PC-9 (cell line): ENCODE measurements at regions of chr3 and their contacts with region 1.

Region 1: GRCh38 chr3:177448987-177449975 is 252.0 kb upstream of the TBL1XR1 start:
- DNase-seq: peak; percentile 82 to 99
- H3K4me3 ChIP-seq: peak overlapping the region; percentile 9; the same call in 1 of the 2 replicates
- H3K27ac ChIP-seq: peak overlapping the region; percentile 89
- H3K4me1 ChIP-seq: peaks cover 66% of the 10 kb centered on the region
- H3K27me3 ChIP-seq: no peaks in the 10 kb centered on the region
- CTCF ChIP-seq: no peak

Region 2: GRCh38 chr3:177050501-177051237 is 398.6 kb before region 1 on chr3:
- CTCF ChIA-PET with region 1: no interaction called
- POLR2A ChIA-PET with region 1: interaction called, 4 read pairs
- intact Hi-C with region 1: loop called (anchors 5 kb)
- DNase-seq: peak in 1 of 2 experiments; percentile 59
- H3K4me3 ChIP-seq: no peak overlapping the region
- H3K27ac ChIP-seq: peak overlapping the region; percentile 40
- H3K4me1 ChIP-seq: peaks cover 15% of the 10 kb centered on the region
- H3K27me3 ChIP-seq: no peaks in the 10 kb centered on the region
- CTCF ChIP-seq: peak; percentile 90

Region 3: DNA sequence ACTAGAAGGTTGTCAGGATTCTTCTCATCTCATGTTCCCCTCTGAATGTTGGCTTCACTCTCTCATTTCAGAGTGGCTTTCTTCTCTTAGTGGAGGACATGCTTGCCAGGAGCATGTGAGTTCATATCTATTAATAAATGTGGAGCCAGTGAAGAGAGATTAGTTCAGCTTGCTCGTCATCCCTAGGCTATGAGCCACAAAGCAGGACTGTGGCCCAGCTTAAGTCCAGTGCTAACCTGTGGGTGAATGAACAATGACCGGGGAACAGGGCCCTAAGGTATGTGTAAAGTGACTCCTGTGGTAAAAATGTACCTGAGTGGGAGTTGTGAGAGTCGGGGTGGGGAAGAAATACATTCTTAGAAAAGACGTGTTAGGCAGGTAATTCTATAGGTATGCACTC is 155.1 kb before region 1 on chr3:
- CTCF ChIA-PET with region 1: no interaction called
- POLR2A ChIA-PET with region 1: no interaction called
- intact Hi-C with region 1: loop called (anchors 2 kb)
- DNase-seq: peak; percentile 69 to 71
- H3K4me3 ChIP-seq: no peak overlapping the region
- H3K27ac ChIP-seq: peak overlapping the region; percentile 57; the same call in 1 of the 2 replicates
- H3K4me1 ChIP-seq: peaks cover 23% of the 10 kb centered on the region
- H3K27me3 ChIP-seq: no peaks in the 10 kb centered on the region
- CTCF ChIP-seq: no peak

Region 4: DNA sequence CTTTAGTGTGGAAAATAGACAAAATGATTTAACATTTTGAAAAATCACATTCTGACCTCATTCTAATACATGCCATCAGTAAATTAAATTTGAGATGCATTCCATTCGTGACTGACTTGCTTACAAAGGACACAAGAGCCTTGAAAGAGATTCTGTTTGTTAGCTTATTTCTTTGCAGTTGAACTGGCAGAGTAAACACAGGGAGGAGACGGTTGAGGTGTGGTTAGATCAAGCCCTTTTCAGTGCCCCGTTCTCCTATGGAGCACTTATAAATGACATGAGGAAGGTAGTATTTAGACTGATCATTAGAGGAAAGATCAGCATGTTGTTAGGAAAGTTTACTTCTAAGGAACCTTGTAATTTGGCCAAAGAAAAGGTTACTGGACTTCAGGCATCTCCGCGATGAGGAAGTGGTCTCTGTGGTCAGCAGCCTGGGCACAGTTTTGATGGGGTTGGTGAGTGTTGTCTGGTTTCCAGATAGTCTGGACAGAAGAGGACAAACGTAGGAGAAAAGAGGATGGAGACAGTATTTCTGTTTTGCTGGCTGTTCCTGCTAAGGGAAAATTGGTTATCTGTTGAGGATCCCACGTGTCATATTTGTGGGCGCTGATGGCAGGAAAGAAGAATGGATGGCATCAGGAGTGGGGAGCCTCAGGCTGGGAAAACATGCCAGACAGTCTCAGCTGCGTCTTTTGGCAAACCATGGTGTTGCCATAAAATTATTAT is 76.9 kb after region 1 on chr3:
- CTCF ChIA-PET with region 1: interaction called, 5 read pairs
- POLR2A ChIA-PET with region 1: no interaction called
- intact Hi-C with region 1: loop called (anchors 1 kb)
- DNase-seq: peak; percentile 25 to 87
- H3K4me3 ChIP-seq: no peak overlapping the region
- H3K27ac ChIP-seq: no peak overlapping the region
- H3K4me1 ChIP-seq: peaks cover 79% of the 10 kb centered on the region
- H3K27me3 ChIP-seq: no peaks in the 10 kb centered on the region
- CTCF ChIP-seq: no peak

Region 5: GRCh38 chr3:177615015-177615414 is 165.7 kb after region 1 on chr3:
- CTCF ChIA-PET with region 1: no interaction called
- POLR2A ChIA-PET with region 1: interaction called, 8 read pairs
- intact Hi-C with region 1: loop called (anchors 1 kb)
- DNase-seq: peak; percentile 84 to 96
- H3K4me3 ChIP-seq: no peak overlapping the region
- H3K27ac ChIP-seq: peak overlapping the region; percentile 62
- H3K4me1 ChIP-seq: peaks cover 87% of the 10 kb centered on the region
- H3K27me3 ChIP-seq: no peaks in the 10 kb centered on the region
- CTCF ChIP-seq: no peak

Region 6: GRCh38 chr3:177816667-177817208 is 367.5 kb after region 1 on chr3:
- CTCF ChIA-PET with region 1: no interaction called
- POLR2A ChIA-PET with region 1: no interaction called
- intact Hi-C with region 1: loop called (anchors 1 kb)
- DNase-seq: peak; percentile 75 to 97
- H3K4me3 ChIP-seq: 0 out of 2 replicates have a peak overlapping the region, but pooled peaks have one; percentile 1
- H3K27ac ChIP-seq: peak overlapping the region; percentile 76
- H3K4me1 ChIP-seq: peaks cover 40% of the 10 kb centered on the region
- H3K27me3 ChIP-seq: no peaks in the 10 kb centered on the region
- CTCF ChIP-seq: peak; percentile 46; the same call in 1 of the 2 replicates

Region 7: DNA sequence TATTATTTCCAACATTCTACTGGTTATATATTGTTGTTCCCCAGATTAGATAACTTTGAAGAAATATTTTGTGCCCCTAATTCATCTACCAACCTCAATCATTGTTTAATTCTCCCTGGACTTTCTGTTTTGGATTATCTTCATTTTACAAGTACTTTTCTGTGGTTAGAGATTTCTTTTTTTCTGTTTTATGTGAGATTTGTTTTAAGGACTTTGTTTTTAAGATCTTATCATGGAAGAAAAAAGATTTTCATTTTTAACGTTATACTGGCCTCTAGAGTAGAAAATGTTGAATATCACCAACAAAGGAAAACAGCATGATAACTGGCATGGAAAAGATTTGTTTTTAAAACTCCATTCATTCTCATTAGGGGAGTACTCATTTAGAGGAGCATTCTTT is 876.0 kb after region 1 on chr3:
- CTCF ChIA-PET with region 1: no interaction called
- POLR2A ChIA-PET with region 1: no interaction called
- intact Hi-C with region 1: loop called (anchors 1 kb)
- DNase-seq: no peak
- H3K4me3 ChIP-seq: no peak overlapping the region
- H3K27ac ChIP-seq: no peak overlapping the region
- H3K4me1 ChIP-seq: peaks cover 13% of the 10 kb centered on the region
- H3K27me3 ChIP-seq: no peaks in the 10 kb centered on the region
- CTCF ChIP-seq: peak; percentile 72